ENCODE measurements at regions of chr17 and their contacts with region 1.

Region 1: GRCh38 chr17:4249452-4250029 is 14.2 kb downstream of the ANKFY1 start:
- DNase-seq: no peak
- ATAC-seq: no peak
- H3K4me3 Mint-ChIP-seq: no peak overlapping the region
- H3K27ac Mint-ChIP-seq: no peak overlapping the region
- H3K4me1 Mint-ChIP-seq: peaks cover 41% of the 10 kb centered on the region
- H3K27me3 Mint-ChIP-seq: no peaks in the 10 kb centered on the region
- CTCF ChIP-seq: peak; percentile 52

Region 2: GRCh38 chr17:4229627-4230541 is 19.7 kb before region 1 on chr17:
- CTCF ChIA-PET with region 1: interaction called, 13 read pairs
- POLR2A ChIA-PET with region 1: interaction called, 4 read pairs
- intact Hi-C with region 1: no loop called
- DNase-seq: no peak
- ATAC-seq: no peak
- H3K4me3 Mint-ChIP-seq: no peak overlapping the region
- H3K27ac Mint-ChIP-seq: no peak overlapping the region
- H3K4me1 Mint-ChIP-seq: peaks cover 17% of the 10 kb centered on the region
- H3K27me3 Mint-ChIP-seq: no peaks in the 10 kb centered on the region
- CTCF ChIP-seq: no peak

Region 3: GRCh38 chr17:4304417-4305027 is 55.0 kb after region 1 on chr17:
- CTCF ChIA-PET with region 1: interaction called, 12 read pairs
- POLR2A ChIA-PET with region 1: no interaction called
- intact Hi-C with region 1: no loop called
- DNase-seq: peak; percentile 77
- ATAC-seq: peak; percentile 74
- H3K4me3 Mint-ChIP-seq: no peak overlapping the region
- H3K27ac Mint-ChIP-seq: no peak overlapping the region
- H3K4me1 Mint-ChIP-seq: peaks cover 10% of the 10 kb centered on the region
- H3K27me3 Mint-ChIP-seq: no peaks in the 10 kb centered on the region
- CTCF ChIP-seq: peak; percentile 83

Region 4: GRCh38 chr17:4375039-4375748 is 125.7 kb after region 1 on chr17:
- CTCF ChIA-PET with region 1: no interaction called
- POLR2A ChIA-PET with region 1: no interaction called
- intact Hi-C with region 1: no loop called
- DNase-seq: peak; percentile 90
- ATAC-seq: peak; percentile 86
- H3K4me3 Mint-ChIP-seq: peak overlapping the region; percentile 22
- H3K27ac Mint-ChIP-seq: peak overlapping the region; percentile 87
- H3K4me1 Mint-ChIP-seq: peaks cover 15% of the 10 kb centered on the region
- H3K27me3 Mint-ChIP-seq: no peaks in the 10 kb centered on the region
- CTCF ChIP-seq: no peak